OCI-LY7 (cell line): ENCODE measurements at regions of chr3 and their contacts with region 1.

Region 1: DNA sequence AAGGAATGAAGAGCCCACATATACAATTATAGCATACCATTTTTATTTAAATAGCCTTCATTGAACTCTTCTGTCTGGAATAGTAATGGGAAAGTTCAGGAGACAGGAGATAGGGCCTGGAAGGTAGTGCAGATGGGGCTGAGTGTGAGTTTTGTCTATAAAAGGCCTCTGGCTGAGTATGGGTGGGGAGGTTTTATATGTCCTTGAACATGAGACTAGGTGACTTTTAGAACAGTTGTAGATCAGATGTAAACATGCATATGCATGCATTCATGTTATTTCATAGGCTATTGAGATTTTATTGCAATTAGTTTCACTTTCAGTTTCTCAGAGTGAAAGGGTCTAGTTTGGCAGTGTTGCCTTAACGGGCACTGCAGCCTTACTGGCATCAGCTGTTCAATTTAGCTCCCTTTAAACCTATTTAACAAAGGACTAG is 27.1 kb downstream of the CGGBP1 start:
- DNase-seq: peak; percentile 60
- H3K4me3 ChIP-seq: peak overlapping the region; percentile 65
- H3K27ac ChIP-seq: no peak overlapping the region
- H3K4me1 ChIP-seq: peaks cover 19% of the 10 kb centered on the region
- CTCF ChIP-seq: no peak

Region 2: DNA sequence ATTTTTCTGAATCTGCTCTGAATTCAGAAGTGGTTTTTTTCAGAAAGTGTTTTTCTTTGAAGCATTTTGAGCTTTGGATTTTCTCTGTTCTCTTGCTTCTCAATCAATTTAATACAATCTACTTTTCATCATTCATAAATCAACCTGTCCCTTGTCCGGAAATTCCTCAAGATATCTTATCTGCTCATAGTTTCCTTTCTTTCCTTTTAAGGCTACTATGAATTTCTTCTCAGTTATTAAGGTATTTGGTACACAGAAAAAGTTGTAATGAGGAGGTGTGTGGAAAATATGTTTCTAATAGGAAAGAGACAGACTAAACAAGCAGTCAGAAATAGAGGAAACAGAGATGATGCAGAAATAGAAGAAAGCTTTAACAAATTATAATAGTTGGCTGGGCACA is 12.8 kb after region 1 on chr3:
- CTCF ChIA-PET with region 1: no interaction called
- POLR2A ChIA-PET with region 1: interaction called, 14 read pairs
- intact Hi-C with region 1: no loop called
- DNase-seq: no peak
- H3K4me3 ChIP-seq: no peak overlapping the region
- H3K27ac ChIP-seq: no peak overlapping the region
- H3K4me1 ChIP-seq: no peaks in the 10 kb centered on the region
- CTCF ChIP-seq: no peak